Mammary epithelial cell (primary cell): ENCODE measurements at regions of chr1 and their contacts with region 1.

Region 1: DNA sequence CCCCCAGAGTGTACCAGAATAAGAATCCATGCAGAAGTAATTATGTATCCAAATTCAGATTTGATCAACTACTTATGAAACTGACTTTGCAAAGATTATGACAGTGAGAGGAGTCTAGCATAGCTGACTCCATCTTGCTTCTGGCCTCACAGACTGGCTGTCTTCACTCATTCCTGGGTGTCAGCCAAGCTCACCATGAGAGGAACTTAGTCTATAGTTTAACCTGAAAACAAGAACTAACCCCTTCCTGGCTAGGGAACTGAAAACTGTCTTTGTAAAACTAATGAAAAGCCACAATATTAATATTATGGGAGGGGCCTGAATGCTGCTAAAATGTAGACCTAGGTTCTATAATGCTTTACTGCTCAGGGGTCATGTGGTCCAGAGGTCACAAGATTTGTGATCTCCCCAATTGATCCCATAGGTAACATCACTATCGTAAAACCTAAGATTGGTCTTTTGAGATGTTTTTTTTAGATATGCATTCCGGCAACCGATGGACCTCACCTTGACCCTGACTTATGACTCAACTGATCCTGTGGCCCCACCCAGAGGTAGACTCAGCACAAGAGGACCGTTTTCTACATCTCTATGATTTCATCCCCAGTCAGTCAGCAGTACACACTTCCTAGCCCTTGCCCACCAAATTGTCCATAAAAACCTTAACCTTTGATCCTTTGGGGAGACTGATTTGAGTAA is 55.2 kb downstream of the ATP1B1 start:
- DNase-seq: no peak
- H3K4me3 ChIP-seq: no peak overlapping the region
- H3K27ac ChIP-seq: no peak overlapping the region
- H3K4me1 ChIP-seq: peaks cover 22% of the 10 kb centered on the region
- H3K27me3 ChIP-seq: no peaks in the 10 kb centered on the region
- CTCF ChIP-seq: no peak

Region 2: DNA sequence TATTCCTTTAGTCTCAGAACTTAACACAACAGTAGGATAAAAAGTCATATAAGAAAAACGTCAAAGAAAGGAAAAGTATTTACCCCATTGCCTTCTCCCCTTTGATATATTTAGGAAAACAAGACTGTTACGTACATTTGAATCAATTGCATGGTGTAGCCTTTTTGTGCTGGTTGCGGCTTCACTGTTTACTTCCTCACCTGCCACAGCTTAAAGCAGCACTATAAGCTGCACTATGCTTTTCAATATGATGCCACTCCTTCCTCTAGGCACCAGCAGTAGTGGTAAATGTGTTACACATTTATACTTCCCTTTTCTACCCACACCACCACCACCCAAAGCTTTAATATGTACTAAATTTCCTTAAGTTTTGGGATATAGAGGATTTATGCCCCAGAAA is 56.0 kb after region 1 on chr1:
- CTCF ChIA-PET with region 1: no interaction called
- dilution Hi-C with region 1: loop called (anchors 5 kb)
- in situ Hi-C with region 1: no loop called
- intact Hi-C with region 1: no loop called
- DNase-seq: no peak
- H3K4me3 ChIP-seq: no peak overlapping the region
- H3K27ac ChIP-seq: no peak overlapping the region
- H3K4me1 ChIP-seq: no peaks in the 10 kb centered on the region
- H3K27me3 ChIP-seq: no peaks in the 10 kb centered on the region
- CTCF ChIP-seq: no peak